HEK293 (cell line): ENCODE measurements at regions of chr3 and their contacts with region 1.

Region 1: GRCh38 chr3:129439817-129440617 is at the starts of genes IFT122 and MBD4:
- H3K4me3 ChIP-seq: peak within 1 kb of the TSS; percentile 86
- H3K27ac ChIP-seq: peak within 1 kb of the TSS; percentile 90
- H3K4me1 ChIP-seq: 0 out of 2 replicates have a peak, but pooled peaks cover 4% of the 10 kb centered on the region
- CTCF ChIP-seq: peak; percentile 23; the same call in 1 of the 2 replicates

Region 2: GRCh38 chr3:129383292-129383860 is 56.6 kb before region 1 on chr3:
- CTCF ChIA-PET with region 1: interaction called, 18 read pairs
- POLR2A ChIA-PET with region 1: interaction called, 9 read pairs
- H3K4me3 ChIP-seq: no peak overlapping the region
- H3K27ac ChIP-seq: no peak overlapping the region
- H3K4me1 ChIP-seq: no peaks in the 10 kb centered on the region
- CTCF ChIP-seq: peak; percentile 66

Region 3: DNA sequence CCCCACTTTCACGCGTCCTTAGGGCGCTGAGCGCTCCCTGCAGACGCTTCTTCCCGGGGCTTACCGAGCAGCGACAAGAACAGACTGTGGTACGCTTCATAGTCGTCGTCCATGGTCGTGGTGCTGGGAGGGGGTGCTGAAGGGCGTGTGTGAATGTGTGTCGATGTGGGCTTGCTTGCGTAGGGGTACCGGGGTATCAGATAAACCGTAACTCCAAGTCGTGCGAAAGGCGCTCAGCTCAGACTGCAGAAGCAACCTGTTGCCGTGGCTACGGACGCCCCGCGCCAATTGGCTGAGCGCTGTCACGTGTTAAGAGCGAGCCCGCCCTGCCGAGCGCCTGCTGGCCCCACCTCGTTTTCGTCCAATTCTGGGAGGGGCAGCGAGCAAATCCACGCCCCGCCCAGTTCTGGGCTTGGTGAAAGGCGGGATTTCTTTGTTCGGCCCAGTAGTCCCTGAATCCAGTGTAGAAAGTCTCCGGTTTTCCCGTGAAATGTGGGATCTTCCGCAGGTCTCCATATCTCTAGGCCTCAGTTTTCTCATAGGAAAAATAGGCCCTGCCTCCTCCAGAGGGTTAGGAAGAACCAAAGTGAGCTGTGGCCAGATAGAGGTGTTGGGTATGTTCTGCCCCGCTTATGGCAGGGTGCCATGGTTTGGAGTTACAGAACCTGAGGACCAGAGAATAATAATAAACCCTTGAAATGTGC is 11.5 kb before region 1 on chr3 and contains the start of gene EFCAB12:
- CTCF ChIA-PET with region 1: interaction called, 3 read pairs
- POLR2A ChIA-PET with region 1: interaction called, 27 read pairs
- H3K4me3 ChIP-seq: peak within 1 kb of the TSS; percentile 27
- H3K27ac ChIP-seq: no peak within 1 kb of the TSS
- H3K4me1 ChIP-seq: no peaks in the 10 kb centered on the region
- CTCF ChIP-seq: no peak

Region 4: DNA sequence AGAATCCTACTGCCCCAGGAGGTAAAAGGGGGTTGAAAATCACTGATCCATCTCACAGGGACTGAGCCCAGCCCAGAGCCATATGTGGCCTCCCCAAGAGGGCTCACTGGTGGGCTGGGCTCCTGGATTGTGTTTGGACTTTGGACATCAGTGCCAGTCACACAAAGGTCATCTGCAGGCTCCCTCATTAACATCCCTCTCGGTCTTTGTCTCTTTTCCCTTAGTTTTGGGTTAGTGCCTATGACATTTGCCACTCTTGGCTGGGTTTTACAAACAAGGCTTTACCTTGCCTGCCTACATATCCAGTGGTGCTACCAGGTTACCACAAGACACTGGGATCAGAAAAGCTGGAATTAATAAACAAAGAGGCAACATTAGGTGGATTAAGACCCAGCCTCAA is 27.9 kb after region 1 on chr3:
- CTCF ChIA-PET with region 1: no interaction called
- POLR2A ChIA-PET with region 1: no interaction called
- H3K4me3 ChIP-seq: no peak overlapping the region
- H3K27ac ChIP-seq: no peak overlapping the region
- H3K4me1 ChIP-seq: no peaks in the 10 kb centered on the region
- CTCF ChIP-seq: no peak

Region 5: DNA sequence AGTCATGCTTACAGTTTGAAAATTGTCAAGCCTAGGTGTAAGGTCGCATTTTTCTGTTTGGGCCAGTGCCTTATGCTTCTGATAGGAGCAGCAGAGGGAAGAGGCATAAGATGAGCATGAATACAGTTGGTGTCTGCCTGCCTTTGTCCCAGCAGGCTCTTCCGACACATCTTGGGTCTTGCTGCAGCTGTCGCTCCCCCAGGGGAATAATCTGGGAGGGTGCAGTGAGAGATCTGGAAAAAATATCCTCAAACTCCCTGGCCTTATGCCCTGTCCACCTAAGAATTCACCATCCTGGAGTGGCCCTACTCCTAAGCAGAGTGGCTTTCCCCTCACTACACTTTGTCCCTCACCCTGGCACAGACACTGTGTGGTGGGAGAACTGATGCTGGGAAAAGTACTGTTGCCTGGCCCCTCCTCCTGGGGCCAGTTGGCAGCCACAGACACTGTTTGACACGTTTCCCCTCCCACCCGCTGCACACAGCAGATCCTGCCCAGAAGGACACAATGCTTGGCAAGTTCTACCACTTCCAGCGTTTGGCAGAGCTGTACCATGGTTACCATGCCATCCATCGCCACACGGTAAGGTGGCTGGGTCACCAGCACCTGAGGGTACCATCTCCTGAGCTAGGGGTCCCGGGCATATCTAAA is 67.3 kb after region 1 on chr3:
- CTCF ChIA-PET with region 1: no interaction called
- POLR2A ChIA-PET with region 1: no interaction called
- H3K4me3 ChIP-seq: no peak overlapping the region
- H3K27ac ChIP-seq: no peak overlapping the region
- H3K4me1 ChIP-seq: no peaks in the 10 kb centered on the region
- CTCF ChIP-seq: no peak